Aorta (tissue), 5 donors: ENCODE measurements at regions of chr11 and their contacts with region 1.

Region 1: DNA sequence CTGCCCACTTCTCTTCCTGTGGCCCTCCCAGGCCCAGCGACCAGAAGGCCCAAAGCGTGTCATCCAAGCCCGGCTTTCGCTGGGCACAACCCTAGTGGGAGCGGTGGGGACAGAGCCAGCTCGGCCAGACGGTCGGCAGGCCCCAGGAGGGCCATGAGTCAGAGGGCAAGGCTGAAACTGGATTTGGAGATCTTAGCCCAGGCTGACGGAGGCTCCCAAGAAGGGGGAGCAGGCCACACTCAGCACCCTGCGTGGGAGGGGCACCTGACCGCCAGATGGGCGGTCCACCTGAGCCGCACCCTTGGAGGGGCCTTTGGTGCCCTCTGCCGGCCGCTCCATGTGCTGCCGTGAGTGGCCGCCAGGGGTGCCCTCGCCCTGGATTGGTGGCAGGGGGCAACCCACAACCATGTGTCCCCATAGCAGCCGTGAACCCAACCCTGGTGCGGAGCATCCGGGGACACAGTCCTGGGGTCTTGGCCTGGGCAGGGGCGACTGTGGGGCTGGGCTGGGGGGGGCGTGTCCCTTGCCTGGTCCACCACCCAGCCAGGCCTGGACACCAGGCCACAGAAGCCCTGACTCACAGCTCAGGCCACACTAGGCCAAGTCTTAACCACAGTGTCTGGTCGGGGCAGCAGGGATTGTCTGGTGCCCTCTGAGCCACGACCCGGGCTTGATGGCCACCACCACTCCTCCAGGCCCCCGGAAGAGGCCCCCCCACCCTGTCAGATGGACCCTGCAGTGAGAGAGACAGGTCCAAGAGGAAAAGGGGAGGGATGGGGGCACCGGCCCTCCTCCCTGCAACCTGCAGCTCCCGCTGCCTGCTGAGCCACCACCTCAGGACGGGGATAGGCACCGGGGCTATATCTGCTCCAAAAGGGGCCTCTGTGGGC is 19.2 kb upstream of the TALDO1 start:
- DNase-seq: peak; percentile 94 to 97
- ATAC-seq: peak; percentile 91
- H3K4me3 ChIP-seq: no peak overlapping the region
- H3K27ac ChIP-seq: peak overlapping the region in 1 of 2 donors; percentile 22
- H3K4me1 ChIP-seq: no peaks in the 10 kb centered on the region
- H3K27me3 ChIP-seq: no peaks in the 10 kb centered on the region

Region 2: DNA sequence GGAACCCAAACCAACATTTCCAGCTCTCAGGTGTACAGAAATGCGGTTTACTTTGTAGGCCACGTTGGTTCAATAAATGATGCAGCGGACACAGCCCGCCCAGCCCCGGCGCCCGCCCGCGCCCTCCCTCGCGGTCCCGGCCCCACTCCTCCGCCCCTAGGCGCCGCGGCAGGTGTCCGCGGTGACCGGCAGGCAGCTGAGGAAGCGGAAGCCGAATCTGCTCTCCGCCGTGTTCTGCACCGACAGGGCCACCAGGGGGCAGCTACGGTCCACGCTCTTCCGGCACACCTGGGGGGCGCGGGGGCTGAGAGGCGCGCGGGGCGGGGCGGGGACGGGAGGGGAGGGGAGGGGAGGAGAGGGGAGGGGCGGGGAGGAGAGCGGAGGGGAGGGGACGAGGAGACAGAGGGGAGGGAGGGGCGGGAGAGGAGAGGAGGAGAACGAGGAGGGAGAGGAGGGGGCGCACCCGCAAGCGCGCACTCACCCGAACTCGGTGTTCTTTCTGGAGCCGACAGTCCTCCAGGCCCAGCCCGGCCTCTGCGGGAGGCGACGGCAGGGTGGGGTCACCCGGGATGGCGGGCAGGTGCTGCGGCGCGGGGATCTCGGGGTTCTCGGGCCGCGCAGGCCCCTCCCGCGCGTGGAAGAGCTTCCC is 173.2 kb before region 1 on chr11:
- intact Hi-C with region 1: loop called in 1 of 2 experiments (anchors 2 kb)
- DNase-seq: peak in 1 of 2 donors; percentile 88
- ATAC-seq: peak; percentile 61
- H3K4me3 ChIP-seq: no peak overlapping the region
- H3K27ac ChIP-seq: no peak overlapping the region
- H3K4me1 ChIP-seq: no peaks in the 10 kb centered on the region
- H3K27me3 ChIP-seq: no peaks in the 10 kb centered on the region

Region 3: GRCh38 chr11:662689-663274 is 65.3 kb before region 1 on chr11:
- intact Hi-C with region 1: loop called (anchors 2 to 5 kb)
- DNase-seq: peak; percentile 71 to 88
- ATAC-seq: peak; percentile 77
- H3K4me3 ChIP-seq: no peak overlapping the region
- H3K27ac ChIP-seq: no peak overlapping the region
- H3K4me1 ChIP-seq: no peaks in the 10 kb centered on the region
- H3K27me3 ChIP-seq: no peaks in the 10 kb centered on the region

Region 4: DNA sequence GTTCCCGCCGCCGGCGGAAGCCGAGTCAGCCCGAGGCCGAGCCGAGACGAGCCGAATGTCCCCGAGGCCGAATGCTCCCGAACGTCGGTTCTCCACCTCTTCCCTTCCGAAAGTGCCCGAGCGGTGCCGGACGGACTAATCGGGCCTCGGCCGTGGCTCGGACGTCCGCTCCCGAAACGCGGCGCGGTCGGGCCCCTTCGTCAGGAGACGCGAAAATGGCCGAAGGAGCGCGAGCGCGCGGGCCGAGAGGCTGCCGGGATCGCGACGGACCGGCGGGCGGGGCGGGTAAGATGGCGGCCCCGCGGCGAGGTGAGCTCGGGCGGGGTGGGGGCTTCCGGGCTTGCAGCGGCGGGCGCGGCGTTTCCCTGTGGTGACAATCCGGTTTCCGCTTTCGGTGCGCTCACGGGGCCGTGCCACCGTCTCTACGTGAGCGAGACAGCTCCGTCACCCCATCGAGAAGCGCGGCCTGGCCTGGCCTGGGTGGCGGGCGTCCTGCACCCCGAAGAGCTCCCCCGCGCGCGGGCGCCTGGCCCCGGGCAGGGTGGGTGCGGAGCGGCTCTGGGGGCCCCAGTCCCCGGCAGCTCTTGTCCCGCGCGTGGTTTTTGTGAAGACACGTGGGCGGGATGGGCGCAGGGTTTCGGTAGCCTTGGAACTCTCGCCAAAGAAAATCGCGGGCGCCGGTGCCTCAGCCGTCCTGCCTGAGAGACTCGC is 32.4 kb before region 1 on chr11 and contains the start of gene TMEM80:
- intact Hi-C with region 1: loop called in 1 of 2 experiments (anchors 2 kb)
- DNase-seq: peak; percentile 100
- ATAC-seq: peak; percentile 96
- H3K4me3 ChIP-seq: peak within 1 kb of the TSS; percentile 54 to 72
- H3K27ac ChIP-seq: peak within 1 kb of the TSS; percentile 83 to 92
- H3K4me1 ChIP-seq: no peaks in the 10 kb centered on the region
- H3K27me3 ChIP-seq: no peaks in the 10 kb centered on the region
- total RNA-seq, gene TMEM80: 15.6 to 23.0 TPM